Activated CD4-positive, alpha-beta T cell treated with anti-CD3 and anti-CD28 coated beads for 36 hours (primary cell): ENCODE measurements at regions of chr9 and their contacts with region 1.

Region 1: GRCh38 chr9:88835038-88835466 is 156.2 kb upstream of the S1PR3 start:
- DNase-seq: no peak
- ATAC-seq: peak; percentile 93
- H3K4me3 Mint-ChIP-seq: no peak overlapping the region
- H3K27ac Mint-ChIP-seq: no peak overlapping the region
- H3K4me1 Mint-ChIP-seq: peaks cover 21% of the 10 kb centered on the region
- H3K27me3 Mint-ChIP-seq: peaks cover 63% of the 10 kb centered on the region

Region 2: GRCh38 chr9:88291856-88292255 is 543.2 kb before region 1 on chr9:
- CTCF ChIA-PET with region 1: no interaction called
- POLR2A ChIA-PET with region 1: no interaction called
- intact Hi-C with region 1: no loop called
- DNase-seq: no peak
- ATAC-seq: no peak
- H3K4me3 Mint-ChIP-seq: no peak overlapping the region
- H3K27ac Mint-ChIP-seq: no peak overlapping the region
- H3K4me1 Mint-ChIP-seq: no peaks in the 10 kb centered on the region
- H3K27me3 Mint-ChIP-seq: no peaks in the 10 kb centered on the region

Region 3: DNA sequence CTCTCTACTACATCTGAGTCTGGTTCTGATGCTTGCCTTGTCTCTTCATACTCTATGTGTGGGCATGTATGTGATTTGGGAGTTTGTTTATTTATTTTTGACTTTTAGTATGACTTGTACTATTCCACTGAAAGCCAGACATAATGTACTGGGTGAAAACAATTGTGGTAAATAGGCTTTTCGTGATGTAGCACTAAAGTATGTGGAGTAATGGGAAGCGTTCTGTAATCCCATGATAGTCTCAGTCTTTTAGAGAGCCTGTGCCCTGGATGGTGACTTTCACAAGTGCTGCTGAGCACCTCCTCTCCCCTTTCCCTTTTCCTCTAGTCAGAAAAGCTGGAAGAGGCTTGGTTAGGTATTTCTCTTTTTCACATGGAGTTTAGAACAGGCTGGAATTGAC is 70.5 kb after region 1 on chr9:
- CTCF ChIA-PET with region 1: no interaction called
- POLR2A ChIA-PET with region 1: no interaction called
- intact Hi-C with region 1: no loop called
- DNase-seq: no peak
- ATAC-seq: no peak
- H3K4me3 Mint-ChIP-seq: no peak overlapping the region
- H3K27ac Mint-ChIP-seq: no peak overlapping the region
- H3K4me1 Mint-ChIP-seq: no peaks in the 10 kb centered on the region
- H3K27me3 Mint-ChIP-seq: peaks cover 39% of the 10 kb centered on the region

Region 4: DNA sequence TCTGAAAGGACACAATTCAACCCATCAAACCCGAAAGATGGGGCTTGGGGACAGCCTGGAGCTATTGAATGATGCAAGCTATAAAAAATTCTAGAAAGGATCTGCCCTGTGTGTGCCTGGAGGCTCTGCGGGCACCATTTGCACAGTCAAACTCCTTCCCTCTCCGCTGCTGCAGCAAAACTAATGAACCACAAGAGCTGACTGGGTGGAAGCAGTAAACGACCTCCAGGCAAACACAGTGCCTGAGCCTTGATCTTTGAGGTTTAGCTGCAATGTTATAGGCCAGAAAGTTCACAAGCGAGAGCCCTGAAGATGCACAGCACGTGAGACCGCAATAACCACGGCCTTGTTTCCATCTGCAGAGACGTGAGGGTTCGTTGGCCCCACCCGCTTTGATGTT is 87.0 kb after region 1 on chr9:
- CTCF ChIA-PET with region 1: no interaction called
- POLR2A ChIA-PET with region 1: no interaction called
- intact Hi-C with region 1: loop called (anchors 1 to 5 kb)
- DNase-seq: peak; percentile 74
- ATAC-seq: peak; percentile 70
- H3K4me3 Mint-ChIP-seq: no peak overlapping the region
- H3K27ac Mint-ChIP-seq: no peak overlapping the region
- H3K4me1 Mint-ChIP-seq: peaks cover 44% of the 10 kb centered on the region
- H3K27me3 Mint-ChIP-seq: peaks cover 16% of the 10 kb centered on the region

Region 5: GRCh38 chr9:90053027-90053426 is 1218.0 kb after region 1 on chr9:
- CTCF ChIA-PET with region 1: no interaction called
- POLR2A ChIA-PET with region 1: no interaction called
- intact Hi-C with region 1: no loop called
- DNase-seq: peak; percentile 59
- ATAC-seq: peak; percentile 39
- H3K4me3 Mint-ChIP-seq: no peak overlapping the region
- H3K27ac Mint-ChIP-seq: no peak overlapping the region
- H3K4me1 Mint-ChIP-seq: no peaks in the 10 kb centered on the region
- H3K27me3 Mint-ChIP-seq: peaks cover 21% of the 10 kb centered on the region